ENCODE measurements at regions of chr17 and their contacts with region 1.

Region 1: GRCh38 chr17:1516388-1517161 is at the start of gene INPP5K:
- DNase-seq: peak; percentile 96 to 99 (median 98)
- H3K4me3 ChIP-seq: peak within 1 kb of the TSS; percentile 88
- H3K4me3 Mint-ChIP-seq: peak within 1 kb of the TSS; percentile 93 to 98 (median 94)
- H3K27ac ChIP-seq: peak within 1 kb of the TSS; percentile 89
- H3K27ac Mint-ChIP-seq: peak within 1 kb of the TSS; percentile 90 to 99 (median 96)
- H3K4me1 ChIP-seq: peaks cover 21% of the 10 kb centered on the region
- H3K4me1 Mint-ChIP-seq: peaks cover 20 to 43% (median 35%) of the 10 kb centered on the region in 3 donors
- H3K27me3 ChIP-seq: no peaks in the 10 kb centered on the region
- H3K27me3 Mint-ChIP-seq: no peaks in the 10 kb centered on the region
- total RNA-seq, gene INPP5K: 29.5 to 31.9 TPM

Region 2: GRCh38 chr17:1260086-1260769 is 256.3 kb before region 1 on chr17:
- CTCF ChIA-PET with region 1: interaction called, 19 read pairs
- POLR2A ChIA-PET with region 1: interaction called, 3 read pairs
- DNase-seq: no peak
- H3K4me3 ChIP-seq: no peak overlapping the region
- H3K4me3 Mint-ChIP-seq: peak overlapping the region; percentile 7 to 68 (median 46)
- H3K27ac ChIP-seq: no peak overlapping the region
- H3K27ac Mint-ChIP-seq: peak overlapping the region in 3 of 8 donors; percentile 12 to 66 (median 52)
- H3K4me1 ChIP-seq: peaks cover 21% of the 10 kb centered on the region
- H3K4me1 Mint-ChIP-seq: peaks cover 32 to 44% (median 42%) of the 10 kb centered on the region in 3 donors
- H3K27me3 ChIP-seq: no peaks in the 10 kb centered on the region
- H3K27me3 Mint-ChIP-seq: peaks cover 0 to 3% of the 10 kb centered on the region in 2 donors

Region 3: DNA sequence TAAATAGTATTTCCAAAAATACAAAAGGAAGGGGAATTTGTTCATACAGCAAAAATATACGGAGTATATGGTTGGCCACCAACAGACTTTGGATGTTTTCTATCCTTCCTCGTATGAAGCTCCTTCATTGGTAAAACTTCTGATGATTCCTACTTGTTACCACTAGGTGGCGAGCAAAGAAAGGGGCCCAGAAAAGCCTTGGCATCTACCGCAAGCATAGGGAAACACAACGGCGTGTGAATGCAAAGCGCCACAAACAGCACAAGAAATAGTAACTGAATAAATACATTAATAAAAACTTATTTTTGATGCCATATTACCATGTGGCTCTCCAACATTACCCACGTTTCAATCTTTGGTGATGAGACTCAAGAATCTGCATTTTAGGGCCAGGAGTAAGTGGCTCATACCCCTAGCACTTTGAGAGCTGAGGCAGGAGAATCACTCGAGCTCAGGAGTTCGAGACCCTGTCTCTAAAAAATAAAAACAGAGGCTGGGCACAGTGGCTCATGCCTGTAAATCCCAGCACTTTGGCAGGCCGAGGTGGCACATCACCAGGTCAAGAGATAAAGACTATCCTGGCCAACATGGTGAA is 151.0 kb before region 1 on chr17:
- CTCF ChIA-PET with region 1: interaction called, 103 read pairs
- POLR2A ChIA-PET with region 1: interaction called, 32 read pairs
- DNase-seq: peak; percentile 42 to 77 (median 71)
- H3K4me3 ChIP-seq: no peak overlapping the region
- H3K4me3 Mint-ChIP-seq: peak overlapping the region in 2 of 7 donors; percentile 10 to 19
- H3K27ac ChIP-seq: no peak overlapping the region
- H3K27ac Mint-ChIP-seq: peak overlapping the region; percentile 55 to 82 (median 76)
- H3K4me1 ChIP-seq: peaks cover 50% of the 10 kb centered on the region
- H3K4me1 Mint-ChIP-seq: peaks cover 51 to 81% (median 77%) of the 10 kb centered on the region in 3 donors
- H3K27me3 ChIP-seq: no peaks in the 10 kb centered on the region
- H3K27me3 Mint-ChIP-seq: no peaks in the 10 kb centered on the region

Region 4: GRCh38 chr17:1399679-1400512 is 116.7 kb before region 1 on chr17 and contains the start of gene YWHAE:
- CTCF ChIA-PET with region 1: interaction called, 7 read pairs
- POLR2A ChIA-PET with region 1: interaction called, 16 read pairs
- DNase-seq: peak; percentile 92 to 96 (median 94)
- H3K4me3 ChIP-seq: peak within 1 kb of the TSS; percentile 98
- H3K4me3 Mint-ChIP-seq: peak within 1 kb of the TSS; percentile 97 to 100 (median 99)
- H3K27ac ChIP-seq: peak within 1 kb of the TSS; percentile 63
- H3K27ac Mint-ChIP-seq: peak within 1 kb of the TSS; percentile 98 to 99 (median 98)
- H3K4me1 ChIP-seq: peaks cover 36% of the 10 kb centered on the region
- H3K4me1 Mint-ChIP-seq: peaks cover 31 to 44% (median 39%) of the 10 kb centered on the region in 3 donors
- H3K27me3 ChIP-seq: no peaks in the 10 kb centered on the region
- H3K27me3 Mint-ChIP-seq: peaks cover 0 to 5% of the 10 kb centered on the region in 2 donors
- total RNA-seq, gene YWHAE: 579 to 596 TPM

Region 5: GRCh38 chr17:1455797-1456599 is 60.6 kb before region 1 on chr17 and contains the start of gene CRK:
- CTCF ChIA-PET with region 1: interaction called, 8 read pairs
- POLR2A ChIA-PET with region 1: interaction called, 10 read pairs
- DNase-seq: peak; percentile 98 to 99 (median 98)
- H3K4me3 ChIP-seq: peak within 1 kb of the TSS; percentile 89
- H3K4me3 Mint-ChIP-seq: peak within 1 kb of the TSS; percentile 88 to 97 (median 92)
- H3K27ac ChIP-seq: peak within 1 kb of the TSS; percentile 85
- H3K27ac Mint-ChIP-seq: peak within 1 kb of the TSS; percentile 87 to 97 (median 92)
- H3K4me1 ChIP-seq: peaks cover 34% of the 10 kb centered on the region
- H3K4me1 Mint-ChIP-seq: peaks cover 38 to 50% (median 47%) of the 10 kb centered on the region in 3 donors
- H3K27me3 ChIP-seq: no peaks in the 10 kb centered on the region
- H3K27me3 Mint-ChIP-seq: peaks cover 3 to 8% of the 10 kb centered on the region in 2 donors
- total RNA-seq, gene CRK: 25.3 to 28.8 TPM

Region 6: GRCh38 chr17:1462287-1463112 is 54.1 kb before region 1 on chr17:
- CTCF ChIA-PET with region 1: interaction called, 8 read pairs
- POLR2A ChIA-PET with region 1: interaction called, 19 read pairs
- DNase-seq: no peak
- H3K4me3 ChIP-seq: peak overlapping the region; percentile 44
- H3K4me3 Mint-ChIP-seq: peak overlapping the region; percentile 59 to 90 (median 78)
- H3K27ac ChIP-seq: no peak overlapping the region
- H3K27ac Mint-ChIP-seq: peak overlapping the region; percentile 29 to 94 (median 81)
- H3K4me1 ChIP-seq: peaks cover 38% of the 10 kb centered on the region
- H3K4me1 Mint-ChIP-seq: peaks cover 25 to 30% (median 30%) of the 10 kb centered on the region in 3 donors
- H3K27me3 ChIP-seq: no peaks in the 10 kb centered on the region
- H3K27me3 Mint-ChIP-seq: peaks cover 3 to 8% of the 10 kb centered on the region in 2 donors

Region 7: DNA sequence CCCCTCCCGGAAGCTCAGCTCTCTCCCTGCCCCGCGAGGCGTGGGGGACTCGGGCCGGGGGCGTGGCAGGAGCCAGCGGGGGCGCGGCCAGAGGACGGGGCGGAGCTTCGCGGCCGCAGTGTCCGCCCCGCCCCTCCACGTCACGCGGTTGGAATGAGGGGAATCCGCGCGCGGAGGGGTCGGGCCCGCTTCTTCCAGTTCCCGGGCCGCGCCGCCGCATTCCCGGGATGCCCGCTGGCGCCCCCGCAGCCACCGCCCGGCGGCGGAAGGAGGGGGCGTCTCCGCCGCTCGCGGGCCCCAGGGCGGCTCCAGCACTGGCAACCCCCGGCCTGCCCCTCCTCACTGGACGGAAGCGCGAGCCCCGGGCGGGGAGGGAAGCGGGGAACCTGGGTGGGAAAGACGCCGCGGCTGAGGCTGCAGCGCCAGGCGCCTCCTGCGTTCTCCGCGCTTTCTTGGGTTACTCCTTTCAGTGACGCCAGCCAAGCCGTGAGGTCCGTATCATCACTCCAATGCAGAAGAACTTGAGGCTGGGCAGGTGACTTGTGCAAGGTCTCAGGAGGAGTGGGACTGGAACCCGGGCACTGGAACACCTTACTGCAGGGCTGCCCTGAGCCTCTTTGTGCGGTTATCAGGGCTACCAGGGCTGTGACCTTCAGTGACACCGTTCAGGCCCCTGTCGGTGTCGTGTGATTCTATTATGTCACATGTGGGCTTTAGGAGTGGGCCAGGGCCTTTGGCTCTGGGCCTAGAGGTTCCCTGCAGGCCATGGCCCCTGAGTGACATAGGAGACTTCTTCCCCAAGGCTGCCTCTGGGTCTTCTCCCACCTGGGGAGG is 28.3 kb before region 1 on chr17:
- CTCF ChIA-PET with region 1: interaction called, 5 read pairs
- POLR2A ChIA-PET with region 1: interaction called, 17 read pairs
- DNase-seq: peak; percentile 67 to 83 (median 76)
- H3K4me3 ChIP-seq: peak overlapping the region; percentile 47
- H3K4me3 Mint-ChIP-seq: peak overlapping the region; percentile 80 to 92 (median 84)
- H3K27ac ChIP-seq: peak overlapping the region; percentile 47
- H3K27ac Mint-ChIP-seq: peak overlapping the region in 7 of 8 donors; percentile 25 to 88 (median 70)
- H3K4me1 ChIP-seq: peaks cover 42% of the 10 kb centered on the region
- H3K4me1 Mint-ChIP-seq: peaks cover 21 to 55% (median 28%) of the 10 kb centered on the region in 3 donors
- H3K27me3 ChIP-seq: no peaks in the 10 kb centered on the region
- H3K27me3 Mint-ChIP-seq: peaks cover 0 to 1% of the 10 kb centered on the region in 2 donors

Region 8: GRCh38 chr17:1928976-1929375 is 412.4 kb after region 1 on chr17:
- CTCF ChIA-PET with region 1: no interaction called
- POLR2A ChIA-PET with region 1: no interaction called
- DNase-seq: no peak
- H3K4me3 ChIP-seq: no peak overlapping the region
- H3K4me3 Mint-ChIP-seq: no peak overlapping the region
- H3K27ac ChIP-seq: no peak overlapping the region
- H3K27ac Mint-ChIP-seq: no peak overlapping the region
- H3K4me1 ChIP-seq: no peaks in the 10 kb centered on the region
- H3K4me1 Mint-ChIP-seq: no peaks in the 10 kb centered on the region
- H3K27me3 ChIP-seq: no peaks in the 10 kb centered on the region
- H3K27me3 Mint-ChIP-seq: peaks cover 0 to 4% of the 10 kb centered on the region in 2 donors

Measured in CD8-positive, alpha-beta memory T cell (primary cell).